Naive thymus-derived CD8-positive, alpha-beta T cell (primary cell): ENCODE measurements at regions of chr11 and their contacts with region 1.

Region 1: DNA sequence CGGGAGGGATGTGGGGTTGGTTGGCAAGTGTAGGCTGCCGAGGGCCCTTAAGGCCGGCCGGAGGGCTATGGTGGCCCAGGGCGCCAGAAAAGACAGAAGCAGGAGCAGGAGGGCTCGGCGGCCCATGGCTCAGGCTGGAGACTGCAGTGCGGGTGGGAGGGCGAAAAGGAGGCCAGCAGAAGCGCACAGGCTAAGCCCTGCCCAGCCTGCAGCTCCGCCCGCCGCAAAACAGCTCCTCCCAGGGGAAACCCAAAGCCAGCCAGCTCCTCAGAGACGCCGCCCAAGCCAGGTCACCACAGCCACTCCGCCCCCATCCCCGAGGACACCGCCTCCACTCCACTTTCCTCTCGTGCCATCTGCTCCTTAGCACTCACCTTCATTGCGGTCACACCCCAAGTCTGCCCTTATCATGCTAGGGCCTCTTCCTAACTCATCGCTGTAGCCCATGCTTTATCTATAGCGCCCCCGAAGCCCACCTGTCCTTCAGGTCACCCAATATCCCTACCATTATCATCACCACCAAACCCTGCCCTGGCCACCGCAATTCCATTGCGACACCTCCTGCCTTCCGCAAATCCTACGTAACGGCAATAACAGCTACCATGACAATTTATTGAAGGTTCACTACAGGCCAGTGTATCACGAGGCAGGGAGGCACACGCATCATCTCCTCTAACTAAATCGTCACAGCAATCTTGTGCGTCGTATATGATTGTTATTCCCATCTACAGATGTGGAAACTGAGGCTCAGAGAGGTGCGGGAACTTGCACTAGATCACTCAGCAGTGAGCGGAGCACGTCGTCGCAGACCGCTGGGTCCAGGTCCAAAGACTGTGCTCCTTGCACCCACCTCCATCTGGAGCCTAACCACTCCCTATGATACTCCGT is at the start of gene PRCP:
- DNase-seq: peak; percentile 82 to 95 (median 91)
- ATAC-seq: peak; percentile 71 to 76
- H3K4me3 Mint-ChIP-seq: peak within 1 kb of the TSS; percentile 90 to 100 (median 100)
- H3K27ac Mint-ChIP-seq: peak within 1 kb of the TSS; percentile 92 to 100 (median 100)
- H3K4me1 Mint-ChIP-seq: peaks cover 26 to 55% (median 49%) of the 10 kb centered on the region in 4 donors
- H3K27me3 Mint-ChIP-seq: no peaks in the 10 kb centered on the region
- polyA plus RNA-seq, gene PRCP: 48.3 to 50.2 (median 49.3) TPM

Region 2: GRCh38 chr11:82867495-82868082 is 32.9 kb before region 1 on chr11:
- POLR2A ChIA-PET with region 1: interaction called, 19 read pairs
- DNase-seq: peak; percentile 47 to 89 (median 76)
- ATAC-seq: peak; percentile 46 to 68
- H3K4me3 Mint-ChIP-seq: peak overlapping the region in 7 of 10 donors; percentile 43 to 77 (median 66)
- H3K27ac Mint-ChIP-seq: peak overlapping the region in 7 of 10 donors; percentile 44 to 81 (median 65)
- H3K4me1 Mint-ChIP-seq: peaks cover 8 to 13% (median 11%) of the 10 kb centered on the region in 4 donors
- H3K27me3 Mint-ChIP-seq: no peaks in the 10 kb centered on the region

Region 3: GRCh38 chr11:82959987-82960778 is 59.7 kb after region 1 on chr11:
- POLR2A ChIA-PET with region 1: interaction called, 20 read pairs
- DNase-seq: peak in 9 of 10 donors; percentile 23 to 89 (median 70)
- ATAC-seq: peak; percentile 84 to 91
- H3K4me3 Mint-ChIP-seq: peak overlapping the region; percentile 50 to 90 (median 74)
- H3K27ac Mint-ChIP-seq: peak overlapping the region; percentile 90 to 99 (median 96)
- H3K4me1 Mint-ChIP-seq: peaks cover 39 to 95% (median 85%) of the 10 kb centered on the region in 4 donors
- H3K27me3 Mint-ChIP-seq: no peaks in the 10 kb centered on the region

Region 4: GRCh38 chr11:83071567-83072349 is 171.2 kb after region 1 on chr11 and contains the start of gene RAB30:
- POLR2A ChIA-PET with region 1: interaction called, 12 read pairs
- DNase-seq: peak; percentile 70 to 98 (median 94)
- ATAC-seq: peak; percentile 94 to 95
- H3K4me3 Mint-ChIP-seq: no peak within 1 kb of the TSS
- H3K27ac Mint-ChIP-seq: no peak within 1 kb of the TSS
- H3K4me1 Mint-ChIP-seq: peaks cover 9 to 43% (median 26%) of the 10 kb centered on the region in 4 donors
- H3K27me3 Mint-ChIP-seq: no peaks in the 10 kb centered on the region
- polyA plus RNA-seq, gene RAB30: 10.7 to 17.4 (median 12.8) TPM

Region 5: GRCh38 chr11:83285771-83286528 is 385.4 kb after region 1 on chr11 and contains the start of gene CCDC90B:
- POLR2A ChIA-PET with region 1: interaction called, 13 read pairs
- DNase-seq: peak; percentile 78 to 99 (median 94)
- ATAC-seq: peak; percentile 90 to 91
- H3K4me3 Mint-ChIP-seq: peak within 1 kb of the TSS; percentile 89 to 99 (median 98)
- H3K27ac Mint-ChIP-seq: peak within 1 kb of the TSS; percentile 98 to 100 (median 100)
- H3K4me1 Mint-ChIP-seq: peaks cover 16 to 51% (median 37%) of the 10 kb centered on the region in 4 donors
- H3K27me3 Mint-ChIP-seq: peaks cover 0 to 1% (median 0%) of the 10 kb centered on the region in 5 donors
- polyA plus RNA-seq, gene CCDC90B: 48.5 to 54.7 (median 52.1) TPM